Ascending aorta (tissue), 2 donors: ENCODE measurements at regions of chrX and their contacts with region 1.

Region 1: GRCh38 chrX:2608638-2609430 is 82.3 kb upstream of the CD99 start:
- DNase-seq: peak; percentile 40 to 91
- H3K4me3 ChIP-seq: peak overlapping the region; percentile 77 to 94
- H3K27ac ChIP-seq: peak overlapping the region; percentile 67 to 70
- H3K4me1 ChIP-seq: peaks cover 0 to 8% of the 10 kb centered on the region in 2 donors
- H3K27me3 ChIP-seq: no peaks in the 10 kb centered on the region
- CTCF ChIP-seq: no peak

Region 2: DNA sequence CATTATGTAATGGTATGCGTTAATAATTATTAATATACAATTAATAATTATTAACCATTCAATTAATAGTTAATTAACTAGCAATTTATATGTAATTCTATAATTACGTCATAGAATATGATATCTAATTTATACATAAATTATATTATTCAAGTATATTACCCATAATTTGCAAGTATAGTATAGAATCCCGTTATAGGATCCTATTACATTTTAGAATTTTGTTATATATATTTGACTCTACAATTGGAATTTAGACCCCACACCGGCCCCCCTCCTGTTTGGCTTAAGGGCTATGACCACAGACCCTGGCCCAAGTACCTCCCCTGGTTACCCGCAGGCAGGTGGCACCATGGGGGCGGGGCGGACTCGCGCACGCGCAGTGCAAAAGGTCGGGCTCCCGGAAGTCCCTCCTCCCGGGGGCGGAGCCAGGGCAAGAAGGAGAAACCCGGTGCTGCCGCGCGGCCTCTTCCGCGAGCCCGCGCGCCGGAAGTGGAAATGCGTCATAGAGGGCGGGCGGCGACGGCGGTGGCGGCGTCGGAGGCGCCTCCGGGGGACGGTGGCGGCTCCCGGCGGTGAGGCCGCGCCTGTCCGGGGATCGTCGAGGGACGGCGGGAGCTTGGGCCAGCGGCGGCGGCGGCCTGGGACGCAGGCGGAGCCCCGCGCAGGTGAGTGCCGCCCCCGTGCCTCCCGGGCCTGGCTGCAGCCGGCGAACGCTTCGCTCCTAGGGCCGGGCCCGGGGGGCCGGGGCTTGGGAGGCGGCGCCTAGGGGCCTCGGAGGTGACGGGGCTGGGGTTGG is 1017.5 kb before region 1 on chrX and contains the start of gene AKAP17A:
- intact Hi-C with region 1: loop called (anchors 2 kb)
- DNase-seq: peak; percentile 80 to 97
- H3K4me3 ChIP-seq: peak within 1 kb of the TSS; percentile 97 to 98
- H3K27ac ChIP-seq: peak within 1 kb of the TSS; percentile 82 to 87
- H3K4me1 ChIP-seq: peaks cover 0 to 9% of the 10 kb centered on the region in 2 donors
- H3K27me3 ChIP-seq: no peaks in the 10 kb centered on the region
- CTCF ChIP-seq: no peak
- total RNA-seq, gene AKAP17A: 74.0 TPM

Region 3: DNA sequence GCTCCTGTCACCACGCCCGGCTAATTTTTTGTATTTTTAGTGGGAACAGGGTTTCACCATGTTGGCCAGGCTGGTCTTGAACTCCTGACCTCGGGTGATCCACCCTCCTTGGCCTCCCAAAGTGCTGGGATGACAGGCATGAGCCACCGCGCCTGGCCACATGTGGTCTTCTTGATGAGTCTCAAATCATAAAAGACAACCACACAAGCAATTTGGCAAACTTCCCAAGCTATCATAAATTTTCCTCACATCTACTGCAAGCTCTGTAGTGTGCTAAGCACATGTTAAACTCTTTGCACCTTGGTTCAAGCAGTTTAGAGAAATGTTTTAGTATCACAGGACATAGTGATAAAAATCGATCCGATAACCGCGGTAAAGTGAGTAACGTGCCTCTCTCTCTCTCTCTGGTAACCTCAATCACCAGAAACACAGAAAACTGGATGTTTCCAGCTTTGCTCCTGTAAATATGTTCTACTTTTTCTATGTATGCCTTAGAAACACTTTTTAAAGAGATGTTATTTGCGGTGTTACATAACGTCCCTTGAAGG is 364.8 kb before region 1 on chrX:
- intact Hi-C with region 1: no loop called
- DNase-seq: no peak
- H3K4me3 ChIP-seq: no peak overlapping the region
- H3K27ac ChIP-seq: no peak overlapping the region
- H3K4me1 ChIP-seq: no peaks in the 10 kb centered on the region
- H3K27me3 ChIP-seq: no peaks in the 10 kb centered on the region
- CTCF ChIP-seq: no peak

Region 4: GRCh38 chrX:2351999-2352995 is 256.5 kb before region 1 on chrX:
- intact Hi-C with region 1: no loop called
- DNase-seq: no peak
- H3K4me3 ChIP-seq: no peak overlapping the region
- H3K27ac ChIP-seq: no peak overlapping the region
- H3K4me1 ChIP-seq: no peaks in the 10 kb centered on the region
- H3K27me3 ChIP-seq: no peaks in the 10 kb centered on the region
- CTCF ChIP-seq: no peak

Region 5: GRCh38 chrX:2500267-2501075 is 108.4 kb before region 1 on chrX and contains the starts of genes DHRSX and ZBED1:
- intact Hi-C with region 1: loop called (anchors 5 kb)
- DNase-seq: no peak
- H3K4me3 ChIP-seq: peak within 1 kb of the TSS; percentile 84 to 99
- H3K27ac ChIP-seq: peak within 1 kb of the TSS; percentile 77 to 91
- H3K4me1 ChIP-seq: peaks cover 7 to 24% of the 10 kb centered on the region in 2 donors
- H3K27me3 ChIP-seq: no peaks in the 10 kb centered on the region
- CTCF ChIP-seq: no peak
- total RNA-seq, gene DHRSX: 13.4 TPM
- total RNA-seq, gene ZBED1: 34.6 TPM

Region 6: DNA sequence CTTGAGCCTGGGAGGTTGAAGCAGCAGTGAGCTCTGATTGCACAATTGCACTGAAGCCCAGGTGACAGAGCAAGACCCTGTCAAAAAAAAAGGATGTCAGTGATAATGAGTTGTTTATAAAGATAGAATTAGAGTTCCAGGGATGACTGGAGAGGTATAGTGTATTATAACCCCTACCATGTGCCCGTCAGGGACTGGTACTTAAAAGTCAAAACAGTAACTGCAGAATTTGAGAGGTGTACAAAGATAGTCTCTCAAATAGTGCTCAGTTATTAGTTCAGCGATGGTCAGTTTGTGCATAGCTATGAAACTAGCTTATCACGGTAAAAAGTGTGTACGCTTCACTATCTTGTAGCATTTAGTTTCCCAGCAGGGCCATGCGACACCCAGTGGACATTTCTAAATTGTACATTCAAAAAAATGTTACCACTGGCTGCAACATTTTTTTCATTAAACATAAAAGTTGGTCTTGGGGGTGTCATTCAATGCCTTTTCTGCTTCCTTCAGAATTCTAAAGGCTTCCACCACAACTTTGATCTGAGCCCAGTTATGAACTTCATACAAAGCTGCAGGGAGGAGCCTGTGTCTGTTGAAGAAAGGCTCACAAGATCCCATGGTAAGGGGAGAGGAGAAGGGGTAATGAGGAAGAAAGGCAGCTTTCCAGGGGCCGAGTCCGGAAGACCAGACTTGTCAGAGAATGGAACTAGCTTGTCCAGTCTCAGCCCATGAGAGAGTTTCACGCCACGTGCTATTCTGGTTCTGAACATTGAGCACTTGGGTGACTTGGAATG is 210.7 kb after region 1 on chrX:
- intact Hi-C with region 1: loop called (anchors 10 kb)
- DNase-seq: no peak
- H3K4me3 ChIP-seq: no peak overlapping the region
- H3K27ac ChIP-seq: no peak overlapping the region
- H3K4me1 ChIP-seq: no peaks in the 10 kb centered on the region
- H3K27me3 ChIP-seq: no peaks in the 10 kb centered on the region
- CTCF ChIP-seq: peak in 2 of 3 experiments; percentile 22 to 50

Region 7: DNA sequence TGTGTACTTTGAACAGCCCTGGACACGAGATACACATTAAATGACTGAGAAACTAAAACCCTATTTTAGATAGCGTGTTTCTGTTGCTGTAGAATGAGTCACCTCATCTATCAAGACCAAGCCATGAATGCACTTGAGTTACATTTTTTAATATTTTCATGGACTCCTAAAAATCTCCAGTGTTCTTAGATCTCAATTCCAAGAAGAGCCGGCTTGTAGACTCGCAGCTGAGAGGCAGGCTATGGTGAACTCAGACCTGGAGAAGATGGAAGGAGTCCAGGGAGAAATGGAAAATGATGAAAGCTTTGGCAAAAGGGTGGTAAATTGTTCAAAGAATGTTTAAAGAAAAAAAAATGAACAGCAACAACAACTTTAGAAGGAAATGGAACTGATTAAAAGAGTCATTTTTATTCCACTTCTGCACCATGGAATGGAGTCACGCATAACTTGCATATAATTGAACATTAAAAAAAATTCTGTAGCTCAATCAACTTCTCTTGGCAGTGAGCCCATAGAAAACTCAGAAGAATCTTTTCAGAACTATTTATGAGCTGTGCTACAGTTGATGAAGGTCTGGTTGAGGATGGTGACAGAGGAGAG is 607.8 kb after region 1 on chrX:
- intact Hi-C with region 1: no loop called
- DNase-seq: no peak
- H3K4me3 ChIP-seq: no peak overlapping the region
- H3K27ac ChIP-seq: no peak overlapping the region
- H3K4me1 ChIP-seq: no peaks in the 10 kb centered on the region
- H3K27me3 ChIP-seq: no peaks in the 10 kb centered on the region
- CTCF ChIP-seq: no peak

Region 8: GRCh38 chrX:3811331-3812311 is 1202.8 kb after region 1 on chrX:
- intact Hi-C with region 1: loop called (anchors 5 kb)
- DNase-seq: no peak
- H3K4me3 ChIP-seq: no peak overlapping the region
- H3K27ac ChIP-seq: no peak overlapping the region
- H3K4me1 ChIP-seq: peaks cover 0 to 4% of the 10 kb centered on the region in 2 donors
- H3K27me3 ChIP-seq: no peaks in the 10 kb centered on the region
- CTCF ChIP-seq: peak; percentile 32 to 64 (median 48)